ENCODE measurements at regions of chr7 and their contacts with region 1.

Region 1: GRCh38 chr7:134316539-134317344 is at the start of gene SLC35B4:
- DNase-seq: peak; percentile 97
- H3K4me3 Mint-ChIP-seq: peak within 1 kb of the TSS; percentile 92
- H3K27ac Mint-ChIP-seq: peak within 1 kb of the TSS; percentile 77
- H3K4me1 Mint-ChIP-seq: peaks cover 16% of the 10 kb centered on the region
- H3K27me3 Mint-ChIP-seq: no peaks in the 10 kb centered on the region
- total RNA-seq, gene SLC35B4: 7.9 to 10.3 TPM

Region 2: DNA sequence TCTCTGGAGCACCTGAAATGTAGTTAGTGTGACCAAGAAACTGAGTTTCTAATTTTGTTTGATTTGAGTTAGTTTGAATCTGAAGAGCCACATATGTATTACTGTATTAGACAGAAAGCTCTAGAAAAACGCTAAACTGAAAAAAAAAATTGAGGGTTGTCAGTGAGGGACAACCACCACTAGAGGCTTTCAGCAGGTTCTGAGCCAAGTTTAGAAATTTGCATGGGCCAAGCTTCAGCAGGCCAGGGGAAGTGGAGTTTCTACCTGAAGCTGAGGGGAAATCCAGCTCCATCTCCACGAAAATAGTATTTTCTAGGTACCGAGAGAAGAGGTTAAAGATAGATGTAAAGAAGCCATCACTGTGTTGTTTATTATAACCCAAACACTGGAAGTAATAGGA is 1662.6 kb before region 1 on chr7:
- CTCF ChIA-PET with region 1: no interaction called
- intact Hi-C with region 1: loop called (anchors 5 kb)
- DNase-seq: peak; percentile 53
- H3K4me3 Mint-ChIP-seq: no peak overlapping the region
- H3K27ac Mint-ChIP-seq: peak overlapping the region; percentile 74
- H3K4me1 Mint-ChIP-seq: peaks cover 39% of the 10 kb centered on the region
- H3K27me3 Mint-ChIP-seq: no peaks in the 10 kb centered on the region

Region 3: DNA sequence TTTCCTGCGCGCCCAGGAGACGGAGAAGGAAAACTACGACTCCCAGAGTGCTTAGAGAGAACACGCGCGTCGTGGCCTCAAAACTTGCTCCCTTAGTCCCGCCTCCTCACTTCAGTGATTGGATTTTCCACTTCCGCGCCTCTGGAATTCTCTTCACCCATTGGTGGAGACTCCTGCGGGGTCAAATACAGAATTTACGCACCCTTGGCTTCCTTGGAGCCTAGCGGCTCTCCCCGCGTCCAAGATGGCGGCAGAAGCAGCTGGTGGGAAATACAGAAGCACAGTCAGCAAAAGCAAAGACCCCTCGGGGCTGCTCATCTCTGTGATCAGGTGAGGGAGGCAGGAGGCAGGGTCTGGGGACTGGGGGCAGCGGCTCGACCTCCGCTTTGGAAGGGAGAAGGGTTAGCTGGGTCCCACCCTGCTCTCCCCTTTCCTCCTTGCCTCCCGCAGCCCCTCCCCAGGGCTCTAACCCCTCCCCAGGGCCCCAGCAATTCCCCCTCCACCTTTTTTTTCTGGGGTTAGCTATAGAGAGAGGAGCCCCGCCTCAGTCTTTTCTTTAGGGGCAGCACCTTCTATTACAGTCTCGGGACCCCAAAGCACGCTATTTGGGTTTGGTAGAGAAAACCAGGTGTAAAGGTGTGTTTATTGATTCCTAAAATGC is 1063.8 kb before region 1 on chr7 and contains the start of gene EXOC4:
- CTCF ChIA-PET with region 1: no interaction called
- intact Hi-C with region 1: loop called (anchors 1 kb)
- DNase-seq: peak; percentile 96
- H3K4me3 Mint-ChIP-seq: peak within 1 kb of the TSS; percentile 88
- H3K27ac Mint-ChIP-seq: peak within 1 kb of the TSS; percentile 82
- H3K4me1 Mint-ChIP-seq: peaks cover 29% of the 10 kb centered on the region
- H3K27me3 Mint-ChIP-seq: no peaks in the 10 kb centered on the region
- total RNA-seq, gene EXOC4: 57.1 to 62.1 TPM

Region 4: DNA sequence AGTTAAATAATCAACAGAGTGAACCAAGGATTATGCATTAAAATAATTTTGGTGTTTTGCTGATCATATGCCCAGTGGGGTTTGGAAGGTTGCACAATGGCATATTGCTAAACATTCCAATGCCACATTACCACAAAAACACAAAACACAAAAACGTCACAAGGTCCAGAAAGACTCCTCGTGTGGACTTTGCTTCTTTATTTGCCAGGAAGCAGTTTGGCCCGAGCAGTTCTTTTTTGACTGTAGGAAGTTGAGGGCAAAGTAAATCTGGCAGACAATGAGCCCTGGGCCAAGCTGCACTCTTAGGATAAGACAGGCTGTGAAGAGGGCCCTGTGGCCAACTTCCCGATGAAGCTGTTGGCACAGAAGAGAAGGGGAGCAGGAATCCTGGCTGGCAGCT is 39.2 kb after region 1 on chr7:
- CTCF ChIA-PET with region 1: interaction called, 15 read pairs
- intact Hi-C with region 1: loop called (anchors 1 kb)
- DNase-seq: no peak
- H3K4me3 Mint-ChIP-seq: no peak overlapping the region
- H3K27ac Mint-ChIP-seq: no peak overlapping the region
- H3K4me1 Mint-ChIP-seq: peaks cover 7% of the 10 kb centered on the region
- H3K27me3 Mint-ChIP-seq: no peaks in the 10 kb centered on the region

Region 5: GRCh38 chr7:134423676-134424075 is 106.9 kb after region 1 on chr7:
- CTCF ChIA-PET with region 1: no interaction called
- intact Hi-C with region 1: no loop called
- DNase-seq: no peak
- H3K4me3 Mint-ChIP-seq: no peak overlapping the region
- H3K27ac Mint-ChIP-seq: no peak overlapping the region
- H3K4me1 Mint-ChIP-seq: no peaks in the 10 kb centered on the region
- H3K27me3 Mint-ChIP-seq: peaks cover 3% of the 10 kb centered on the region

Region 6: GRCh38 chr7:134646425-134647305 is 329.9 kb after region 1 on chr7 and contains the start of gene BPGM:
- CTCF ChIA-PET with region 1: no interaction called
- intact Hi-C with region 1: loop called (anchors 1 kb)
- DNase-seq: peak; percentile 99
- H3K4me3 Mint-ChIP-seq: no peak within 1 kb of the TSS
- H3K27ac Mint-ChIP-seq: no peak within 1 kb of the TSS
- H3K4me1 Mint-ChIP-seq: peaks cover 37% of the 10 kb centered on the region
- H3K27me3 Mint-ChIP-seq: no peaks in the 10 kb centered on the region
- total RNA-seq, gene BPGM: 13.9 to 14.2 TPM

Region 7: GRCh38 chr7:134669845-134670373 is 353.2 kb after region 1 on chr7:
- CTCF ChIA-PET with region 1: no interaction called
- intact Hi-C with region 1: no loop called
- DNase-seq: peak; percentile 88
- H3K4me3 Mint-ChIP-seq: peak overlapping the region; percentile 65
- H3K27ac Mint-ChIP-seq: peak overlapping the region; percentile 85
- H3K4me1 Mint-ChIP-seq: peaks cover 52% of the 10 kb centered on the region
- H3K27me3 Mint-ChIP-seq: no peaks in the 10 kb centered on the region

Region 8: DNA sequence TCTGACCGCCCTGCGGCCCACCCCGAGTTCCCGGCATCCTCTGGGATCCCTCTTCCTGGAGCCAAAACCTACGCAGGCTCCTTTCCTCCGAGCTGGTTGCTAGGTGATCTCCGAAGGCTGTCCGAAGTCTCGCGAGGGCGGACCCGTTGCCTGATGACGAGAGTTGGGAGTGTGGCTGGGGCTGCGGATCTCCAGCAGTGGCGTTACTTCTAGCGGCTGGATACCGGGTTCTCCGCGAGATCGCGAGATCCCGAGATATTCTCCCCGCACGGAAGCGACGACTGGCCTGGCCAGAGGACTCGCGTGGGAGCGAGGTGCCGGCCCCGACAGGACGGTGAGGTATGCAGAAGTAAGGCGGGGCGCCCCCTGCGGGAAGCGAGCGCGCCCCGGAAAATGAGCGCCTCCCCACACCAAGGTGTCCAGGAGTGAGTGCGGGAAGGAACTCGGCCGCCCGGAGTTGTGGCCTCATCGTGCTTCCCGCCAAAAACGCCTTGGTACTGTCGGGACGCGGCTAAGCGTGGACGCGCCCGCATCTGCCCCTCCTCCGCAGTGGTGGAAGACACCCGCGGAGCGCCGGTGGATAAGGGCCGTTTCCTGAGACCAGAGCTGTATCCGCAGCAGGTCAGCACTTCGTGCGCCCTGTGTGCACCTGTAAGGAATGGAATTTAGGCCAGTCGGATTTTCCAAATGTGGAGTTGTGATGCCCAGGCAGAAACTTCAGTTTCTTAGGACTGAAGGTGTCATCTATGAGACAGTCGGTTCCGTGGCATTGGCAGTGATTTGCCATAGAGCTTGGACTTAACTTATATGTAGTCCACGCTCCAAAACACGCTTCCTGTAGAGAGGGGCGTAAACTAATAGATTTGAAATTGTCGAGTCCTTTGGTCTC is 669.9 kb after region 1 on chr7 and contains the start of gene AGBL3:
- CTCF ChIA-PET with region 1: no interaction called
- intact Hi-C with region 1: loop called (anchors 10 kb)
- DNase-seq: peak; percentile 97
- H3K4me3 Mint-ChIP-seq: peak within 1 kb of the TSS; percentile 96
- H3K27ac Mint-ChIP-seq: peak within 1 kb of the TSS; percentile 98
- H3K4me1 Mint-ChIP-seq: peaks cover 32% of the 10 kb centered on the region
- H3K27me3 Mint-ChIP-seq: no peaks in the 10 kb centered on the region
- total RNA-seq, gene AGBL3: 2.6 to 3.6 TPM

Measured in activated naive CD4-positive, alpha-beta T cell treated with anti-CD3 and anti-CD28 coated beads for 36 hours (primary cell).